Transverse colon (tissue), 4 donors: ENCODE measurements at regions of chr1 and their contacts with region 1.

Region 1: DNA sequence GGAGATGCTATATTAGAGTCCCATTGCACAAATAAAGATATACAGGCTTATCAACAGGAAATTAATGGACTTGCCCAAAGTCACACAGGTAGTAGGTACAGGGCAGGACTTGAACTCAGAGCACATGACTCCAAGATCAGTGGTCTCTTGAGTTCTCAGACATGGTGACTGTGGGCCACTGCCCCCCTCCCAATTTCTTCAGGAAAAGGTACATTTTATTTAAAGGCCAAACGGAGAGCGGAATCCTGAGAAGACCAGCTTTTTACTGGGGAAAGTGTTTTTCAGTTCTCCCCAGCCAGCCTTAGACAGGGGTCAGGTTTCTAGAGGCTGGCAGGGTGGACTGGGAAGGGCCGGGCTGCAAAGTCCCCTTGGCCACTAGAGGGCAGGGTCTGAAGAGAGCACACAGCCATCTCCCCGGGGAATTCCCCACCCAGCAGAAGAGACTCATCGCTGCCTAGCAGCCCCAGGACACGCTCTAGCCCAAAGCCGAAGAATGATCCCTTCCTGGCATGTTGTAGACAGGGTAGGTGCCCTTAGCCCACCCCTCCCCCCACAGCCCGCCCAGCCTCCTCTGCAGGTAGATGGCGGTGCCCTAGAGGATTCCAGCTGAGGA is 29.7 kb downstream of the ACP6 start:
- DNase-seq: peak; percentile 78
- H3K4me3 ChIP-seq: no peak overlapping the region
- H3K27ac ChIP-seq: no peak overlapping the region
- H3K4me1 ChIP-seq: peaks cover 3 to 10% (median 5%) of the 10 kb centered on the region in 4 donors
- H3K27me3 ChIP-seq: no peaks in the 10 kb centered on the region
- CTCF ChIP-seq: peak; percentile 67 to 87 (median 81)
- EP300 ChIP-seq: no peak
- POLR2A ChIP-seq: no peak

Region 2: GRCh38 chr1:147273409-147274336 is 367.0 kb before region 1 on chr1:
- in situ Hi-C with region 1: loop called (anchors 25 kb)
- intact Hi-C with region 1: no loop called
- DNase-seq: no peak
- H3K4me3 ChIP-seq: no peak overlapping the region
- H3K27ac ChIP-seq: peak overlapping the region; percentile 2 to 38 (median 17)
- H3K4me1 ChIP-seq: peaks cover 0 to 6% (median 3%) of the 10 kb centered on the region in 4 donors
- H3K27me3 ChIP-seq: no peaks in the 10 kb centered on the region
- CTCF ChIP-seq: peak; percentile 29 to 63 (median 56)
- EP300 ChIP-seq: no peak
- POLR2A ChIP-seq: no peak

Region 3: DNA sequence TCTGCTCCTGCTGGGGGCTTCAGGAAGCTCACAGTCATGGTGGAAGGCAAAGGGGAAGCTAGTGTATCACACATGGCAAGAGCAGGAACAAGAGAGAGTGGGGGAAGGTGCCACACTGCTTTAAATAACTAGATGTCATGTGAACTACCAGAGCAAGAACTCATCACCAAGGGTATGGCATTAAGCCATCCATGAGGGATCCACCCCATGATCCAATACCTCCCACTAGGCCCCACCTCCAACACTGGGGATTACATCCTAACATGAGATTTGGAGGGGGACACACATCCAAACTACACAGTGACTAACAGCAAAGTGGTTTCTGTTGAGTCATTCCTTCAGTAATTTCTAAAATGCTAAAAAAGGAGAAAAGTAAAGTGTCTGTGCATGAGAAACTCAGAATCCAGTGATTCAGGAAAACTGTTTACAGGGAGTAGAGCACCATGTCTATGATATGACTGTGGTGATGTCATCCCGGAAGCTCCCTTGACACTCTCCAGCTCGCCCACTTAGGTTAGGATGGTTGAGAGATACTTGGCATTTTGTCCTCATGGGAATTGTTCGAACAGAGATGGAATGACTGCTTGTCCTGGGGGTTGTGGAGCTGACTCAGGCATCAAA is 347.9 kb before region 1 on chr1:
- in situ Hi-C with region 1: loop called in 3 of 4 experiments (anchors 25 kb)
- intact Hi-C with region 1: no loop called
- DNase-seq: no peak
- H3K4me3 ChIP-seq: no peak overlapping the region
- H3K27ac ChIP-seq: no peak overlapping the region
- H3K4me1 ChIP-seq: peaks cover 0 to 3% (median 0%) of the 10 kb centered on the region in 4 donors
- H3K27me3 ChIP-seq: no peaks in the 10 kb centered on the region
- CTCF ChIP-seq: no peak
- EP300 ChIP-seq: no peak
- POLR2A ChIP-seq: no peak

Region 4: GRCh38 chr1:147579532-147579931 is 61.1 kb before region 1 on chr1:
- in situ Hi-C with region 1: no loop called
- intact Hi-C with region 1: no loop called
- DNase-seq: peak; percentile 35
- H3K4me3 ChIP-seq: no peak overlapping the region
- H3K27ac ChIP-seq: peak overlapping the region in 3 of 4 donors; percentile 2 to 9 (median 9)
- H3K4me1 ChIP-seq: peaks cover 0 to 18% (median 11%) of the 10 kb centered on the region in 4 donors
- H3K27me3 ChIP-seq: no peaks in the 10 kb centered on the region
- CTCF ChIP-seq: no peak
- EP300 ChIP-seq: no peak
- POLR2A ChIP-seq: no peak